Ascending aorta (tissue), 2 donors: ENCODE measurements at regions of chr2 and their contacts with region 1.

Region 1: GRCh38 chr2:37324786-37325624 is at the start of gene PRKD3:
- DNase-seq: peak in 1 of 2 donors; percentile 88
- H3K4me3 ChIP-seq: peak within 1 kb of the TSS; percentile 75 to 86
- H3K27ac ChIP-seq: peak within 1 kb of the TSS; percentile 93 to 94
- H3K4me1 ChIP-seq: peaks cover 0 to 29% of the 10 kb centered on the region in 2 donors
- H3K27me3 ChIP-seq: no peaks in the 10 kb centered on the region
- CTCF ChIP-seq: no peak
- total RNA-seq, gene PRKD3: 14.0 TPM

Region 2: GRCh38 chr2:36966370-36967235 is 358.4 kb before region 1 on chr2 and contains the start of gene STRN:
- intact Hi-C with region 1: loop called (anchors 10 kb)
- DNase-seq: peak; percentile 92 to 98
- H3K4me3 ChIP-seq: peak within 1 kb of the TSS; percentile 92 to 96
- H3K27ac ChIP-seq: peak within 1 kb of the TSS; percentile 78 to 92
- H3K4me1 ChIP-seq: no peaks in the 10 kb centered on the region
- H3K27me3 ChIP-seq: no peaks in the 10 kb centered on the region
- CTCF ChIP-seq: no peak
- total RNA-seq, gene STRN: 4.3 TPM

Region 3: DNA sequence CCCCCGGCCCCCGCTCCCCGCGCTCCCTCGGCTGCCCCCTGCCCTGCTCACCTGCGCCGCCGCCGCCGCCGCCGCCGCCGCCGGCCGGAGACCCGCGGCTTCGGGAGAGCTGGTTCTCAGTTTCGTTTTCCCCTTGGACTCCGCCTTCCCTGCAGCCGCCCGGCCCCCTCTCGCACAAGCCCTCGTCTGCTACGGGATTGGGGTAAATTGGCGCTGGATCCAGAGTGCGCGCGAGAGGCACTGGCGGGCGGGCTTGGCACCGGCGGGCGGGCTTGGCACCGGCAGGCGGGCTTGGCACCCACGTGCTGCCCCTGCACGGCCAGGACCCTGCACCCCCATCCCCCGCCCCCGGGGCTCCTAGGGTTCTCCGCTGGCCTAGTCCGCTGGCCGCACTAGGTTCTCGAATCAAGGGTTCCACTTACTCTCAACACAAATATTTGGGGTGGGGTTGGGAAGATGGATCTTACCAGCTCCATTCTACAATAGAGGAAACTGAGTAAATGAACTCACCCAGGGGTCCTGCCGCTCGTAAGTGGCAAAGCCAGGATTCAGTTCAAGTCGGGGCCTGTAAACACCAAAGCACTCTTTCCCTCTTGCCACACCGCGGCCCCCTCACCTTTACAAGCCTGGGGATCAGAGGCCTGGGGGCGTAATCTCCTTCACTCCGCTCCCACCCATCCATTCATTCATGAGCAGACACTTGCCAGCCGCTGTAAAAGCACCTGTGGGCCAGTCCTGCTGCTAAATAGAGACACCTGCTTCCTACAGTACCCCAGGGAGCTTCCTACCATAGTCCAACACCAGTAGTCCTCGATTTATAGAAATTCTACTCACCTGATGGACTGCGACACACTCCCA is 167.9 kb before region 1 on chr2 and contains the start of gene EIF2AK2:
- intact Hi-C with region 1: loop called (anchors 5 kb)
- DNase-seq: peak; percentile 49 to 90
- H3K4me3 ChIP-seq: peak within 1 kb of the TSS; percentile 86 to 98
- H3K27ac ChIP-seq: peak within 1 kb of the TSS; percentile 77 to 85
- H3K4me1 ChIP-seq: peaks cover 6 to 16% of the 10 kb centered on the region in 2 donors
- H3K27me3 ChIP-seq: no peaks in the 10 kb centered on the region
- CTCF ChIP-seq: no peak
- total RNA-seq, gene EIF2AK2: 10.6 TPM

Region 4: DNA sequence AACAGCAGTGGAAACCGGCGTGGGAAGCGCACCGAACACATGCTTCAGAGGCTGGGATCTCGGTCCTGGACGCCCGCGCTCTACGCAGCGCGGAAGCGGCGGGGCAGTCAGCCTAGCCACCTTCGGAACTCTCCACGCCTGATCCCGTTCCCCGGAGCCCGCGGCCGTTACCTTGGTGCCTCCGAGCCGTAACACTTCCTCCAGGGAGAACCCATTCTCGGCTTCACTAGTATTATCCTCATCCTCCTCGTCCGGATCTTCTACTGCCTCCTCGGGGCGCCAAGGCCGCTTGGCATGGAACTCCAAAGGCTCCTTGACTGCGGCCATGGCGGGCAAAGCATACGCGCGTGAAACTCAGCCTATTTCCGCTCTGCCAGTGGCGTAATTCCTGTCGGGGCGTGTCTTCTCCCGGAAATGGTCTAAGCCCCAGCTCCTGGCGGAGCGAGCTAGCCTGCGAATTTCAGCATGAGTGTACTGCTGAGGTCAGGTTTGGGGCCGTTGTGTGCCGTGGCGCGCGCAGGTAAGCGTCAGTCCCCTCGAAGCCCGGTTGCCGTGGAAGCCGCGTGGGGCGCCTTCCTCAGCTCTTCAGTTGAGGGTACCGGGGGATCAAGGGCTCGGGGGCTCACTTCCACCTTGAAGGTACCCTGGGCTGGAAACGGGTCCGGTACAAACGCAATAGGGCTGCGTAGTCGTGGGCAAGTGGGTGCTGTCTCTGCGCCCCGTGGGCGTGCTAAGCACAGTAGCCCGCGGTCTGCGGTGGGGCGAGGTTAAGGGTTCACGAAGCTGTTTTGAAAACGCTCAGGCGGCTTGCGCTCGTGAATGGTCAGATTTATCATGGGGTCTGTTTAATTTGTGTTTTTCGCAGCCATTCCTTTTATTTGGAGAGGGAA is 93.5 kb before region 1 on chr2 and contains the starts of genes CEBPZ and NDUFAF7:
- intact Hi-C with region 1: loop called (anchors 5 kb)
- DNase-seq: peak; percentile 73 to 96
- H3K4me3 ChIP-seq: peak within 1 kb of the TSS; percentile 87 to 95
- H3K27ac ChIP-seq: peak within 1 kb of the TSS; percentile 81 to 94
- H3K4me1 ChIP-seq: peaks cover 7 to 23% of the 10 kb centered on the region in 2 donors
- H3K27me3 ChIP-seq: no peaks in the 10 kb centered on the region
- CTCF ChIP-seq: no peak
- total RNA-seq, gene CEBPZ: 20.2 TPM
- total RNA-seq, gene NDUFAF7: 3.8 TPM

Region 5: DNA sequence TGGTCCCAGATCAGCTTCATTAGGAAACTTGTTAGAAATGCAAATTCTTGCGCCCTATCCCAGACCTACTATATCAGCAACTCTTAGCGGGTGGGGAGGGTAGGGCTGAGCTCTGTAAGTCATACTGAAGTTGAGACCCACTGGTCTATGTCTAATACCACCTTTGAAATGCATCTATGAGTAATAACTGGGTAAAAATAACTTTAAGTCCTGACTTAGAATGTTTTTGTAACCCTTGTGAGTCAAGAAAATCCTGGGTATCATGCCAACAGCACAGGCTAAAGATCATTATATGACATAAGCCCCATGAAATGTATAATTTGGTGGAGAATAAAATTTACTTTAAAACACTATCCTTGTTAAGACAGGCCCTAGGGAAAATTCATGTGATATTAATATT is 41.8 kb before region 1 on chr2:
- intact Hi-C with region 1: loop called (anchors 2 kb)
- DNase-seq: no peak
- H3K4me3 ChIP-seq: peak overlapping the region in 1 of 2 donors; percentile 38
- H3K27ac ChIP-seq: peak overlapping the region; percentile 59 to 62
- H3K4me1 ChIP-seq: peaks cover 3 to 8% of the 10 kb centered on the region in 2 donors
- H3K27me3 ChIP-seq: no peaks in the 10 kb centered on the region
- CTCF ChIP-seq: no peak